Psoas muscle (tissue), 8 donors: ENCODE measurements at regions of chr4 and their contacts with region 1.

Region 1: DNA sequence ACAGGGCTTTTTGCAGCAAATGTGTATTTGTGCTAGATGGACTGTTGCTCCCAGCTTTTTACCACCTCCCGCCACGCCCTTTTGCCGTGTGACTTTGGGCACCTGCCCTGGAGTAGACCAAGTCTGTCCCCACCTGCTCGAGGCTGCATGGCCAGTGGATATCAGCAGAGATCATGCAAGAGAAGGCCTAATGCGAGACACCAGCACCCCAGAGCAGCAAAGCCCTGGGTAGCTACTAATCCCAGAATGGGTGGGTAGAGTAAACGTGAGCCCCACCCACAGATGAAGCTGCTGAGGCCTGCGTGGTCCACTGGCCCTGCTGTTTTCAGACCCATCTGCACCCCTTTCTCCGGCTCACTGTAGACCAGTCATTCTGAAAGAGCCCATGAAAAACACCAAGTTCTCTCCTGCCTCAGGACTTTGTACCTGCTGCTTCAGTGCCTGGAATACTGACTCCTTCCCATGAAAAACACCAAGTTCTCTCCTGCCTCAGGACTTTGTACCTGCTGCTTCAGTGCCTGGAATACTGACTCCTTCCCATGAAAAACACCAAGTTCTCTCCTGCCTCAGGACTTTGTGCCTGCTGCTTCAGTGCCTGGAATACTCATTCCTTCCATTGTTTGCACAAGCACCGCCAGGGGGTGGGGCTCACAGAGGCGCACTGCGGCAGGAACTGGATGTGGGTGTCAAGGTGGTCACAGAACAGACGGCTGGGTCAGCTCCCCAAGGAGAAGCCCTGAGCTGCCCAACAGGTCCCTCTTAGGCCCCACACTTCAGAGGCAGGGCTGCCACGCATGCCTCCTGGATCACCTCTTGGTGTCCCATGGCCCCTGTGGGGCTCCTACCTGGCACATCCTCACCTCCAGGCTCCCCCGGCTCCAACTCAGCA is 5.1 kb upstream of the TNIP2 start:
- DNase-seq: peak in 1 of 2 donors; percentile 35
- ATAC-seq: no peak
- H3K4me3 ChIP-seq: no peak overlapping the region
- H3K27ac ChIP-seq: no peak overlapping the region
- H3K4me1 ChIP-seq: peaks cover 9% of the 10 kb centered on the region
- H3K27me3 ChIP-seq: no peaks in the 10 kb centered on the region
- CTCF ChIP-seq: no peak

Region 2: GRCh38 chr4:2333356-2333841 is 427.9 kb before region 1 on chr4:
- intact Hi-C with region 1: no loop called
- DNase-seq: no peak
- ATAC-seq: no peak
- H3K4me3 ChIP-seq: no peak overlapping the region
- H3K27ac ChIP-seq: no peak overlapping the region
- H3K4me1 ChIP-seq: no peaks in the 10 kb centered on the region
- H3K27me3 ChIP-seq: no peaks in the 10 kb centered on the region
- CTCF ChIP-seq: no peak

Region 3: GRCh38 chr4:2843263-2843940 is 82.1 kb after region 1 on chr4 and contains the start of gene ADD1:
- intact Hi-C with region 1: loop called in 1 of 2 experiments (anchors 5 kb)
- DNase-seq: peak; percentile 90 to 95
- ATAC-seq: peak; percentile 96 to 99 (median 98)
- H3K4me3 ChIP-seq: peak within 1 kb of the TSS; percentile 81
- H3K27ac ChIP-seq: peak within 1 kb of the TSS; percentile 89
- H3K4me1 ChIP-seq: peaks cover 41% of the 10 kb centered on the region
- H3K27me3 ChIP-seq: no peaks in the 10 kb centered on the region
- CTCF ChIP-seq: no peak
- total RNA-seq, gene ADD1: 163 to 214 (median 187) TPM

Region 4: GRCh38 chr4:2934813-2935761 is 173.8 kb after region 1 on chr4:
- intact Hi-C with region 1: loop called (anchors 5 to 10 kb)
- DNase-seq: peak; percentile 96 to 98
- ATAC-seq: peak; percentile 80 to 83 (median 82)
- H3K4me3 ChIP-seq: peak overlapping the region; percentile 100
- H3K27ac ChIP-seq: peak overlapping the region; percentile 97
- H3K4me1 ChIP-seq: peaks cover 55% of the 10 kb centered on the region
- H3K27me3 ChIP-seq: no peaks in the 10 kb centered on the region
- CTCF ChIP-seq: no peak

Region 5: DNA sequence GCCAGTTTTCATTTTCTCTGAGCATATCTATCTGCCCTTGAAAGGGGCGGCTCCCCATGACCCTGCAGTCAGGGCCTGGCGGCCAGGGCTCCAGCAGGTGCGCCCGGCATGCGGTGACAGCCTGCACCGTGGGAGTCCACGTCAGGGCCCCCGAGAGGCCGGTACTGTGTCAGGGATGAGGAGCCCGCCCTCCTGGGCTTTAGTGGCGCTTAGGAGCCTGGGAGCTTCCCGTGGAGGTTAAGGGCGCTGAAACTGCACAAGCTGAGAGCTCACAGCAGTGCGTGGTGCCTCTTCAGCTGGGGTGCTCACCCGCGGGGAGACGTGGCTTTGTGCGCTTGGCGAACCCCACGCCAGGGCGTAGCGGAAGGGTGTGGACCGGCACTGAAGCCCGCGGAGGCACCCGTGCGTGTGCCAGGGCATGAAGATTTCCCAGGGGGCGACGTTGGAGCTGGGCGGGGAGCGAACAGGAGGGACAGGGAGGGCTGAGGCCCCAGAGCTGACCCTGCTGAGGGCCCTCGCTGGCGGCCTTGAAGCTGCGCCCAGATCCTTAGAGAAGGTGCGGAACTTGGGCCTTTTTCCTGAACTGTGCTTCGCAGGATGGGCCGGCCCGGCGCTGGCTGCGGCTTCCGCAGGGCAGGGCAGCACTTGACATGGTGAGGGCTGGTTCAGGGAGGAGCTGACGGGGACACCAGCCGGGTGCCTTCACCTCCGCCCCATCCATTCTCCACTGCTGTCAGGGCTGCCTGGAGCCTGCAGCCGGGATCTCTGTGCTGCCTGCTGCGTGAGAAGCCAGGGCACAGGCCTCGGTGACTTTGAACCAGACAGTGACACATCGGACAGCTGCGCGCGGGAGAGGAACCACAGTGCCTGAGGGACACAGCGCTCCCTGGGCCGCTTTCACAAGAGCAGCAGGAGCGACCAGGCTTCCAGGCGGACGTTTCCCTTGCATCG is 280.2 kb after region 1 on chr4:
- intact Hi-C with region 1: loop called (anchors 5 to 10 kb)
- DNase-seq: peak; percentile 86 to 94
- ATAC-seq: peak; percentile 93 to 95 (median 94)
- H3K4me3 ChIP-seq: peak overlapping the region; percentile 75
- H3K27ac ChIP-seq: peak overlapping the region; percentile 81
- H3K4me1 ChIP-seq: peaks cover 8% of the 10 kb centered on the region
- H3K27me3 ChIP-seq: no peaks in the 10 kb centered on the region
- CTCF ChIP-seq: no peak